Calu3 (cell line): ENCODE measurements at regions of chr14 and their contacts with region 1.

Region 1: DNA sequence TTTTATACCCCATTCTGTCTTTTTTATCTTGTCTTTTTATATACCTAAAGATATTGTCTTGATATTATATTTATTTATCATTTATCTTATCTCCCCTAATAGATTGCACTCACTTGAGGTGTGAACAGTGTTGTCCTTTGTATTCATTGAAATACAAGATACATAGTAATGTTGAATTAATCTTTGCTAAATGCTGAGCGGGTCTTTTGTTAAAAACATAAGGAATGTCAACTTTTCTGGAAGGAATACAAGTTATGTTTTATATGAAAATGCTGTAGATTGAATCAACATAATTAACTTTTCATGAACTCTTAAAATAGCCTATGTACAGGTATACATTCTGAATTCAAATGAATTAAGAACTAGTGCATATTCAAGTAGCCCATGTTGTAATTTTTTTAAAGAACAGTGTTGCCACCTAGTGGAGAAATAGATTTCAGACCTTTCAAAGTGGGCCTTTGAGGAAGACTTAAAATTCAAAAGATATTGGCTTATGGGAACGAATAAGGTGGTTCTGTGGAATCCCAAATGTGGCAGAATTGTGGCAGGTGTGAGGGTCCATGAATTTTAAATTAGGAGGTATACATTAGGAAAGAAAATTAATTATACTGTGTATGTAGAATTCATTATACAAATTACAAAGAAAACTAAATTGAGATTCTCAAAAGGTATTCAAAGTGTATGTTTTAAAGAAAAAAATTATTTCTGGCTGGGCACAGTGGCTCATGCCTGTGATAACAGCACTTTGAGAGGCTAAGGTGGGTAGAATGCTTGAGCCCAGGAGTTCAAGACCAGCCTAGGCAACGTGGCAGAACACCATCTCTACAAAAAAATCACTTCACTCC is 19.1 kb downstream of the BBOF1 start:
- DNase-seq: peak; percentile 21
- H3K4me3 Mint-ChIP-seq: no peak overlapping the region
- H3K27ac Mint-ChIP-seq: no peak overlapping the region
- H3K4me1 Mint-ChIP-seq: no peaks in the 10 kb centered on the region
- H3K27me3 Mint-ChIP-seq: no peaks in the 10 kb centered on the region
- CTCF ChIP-seq: peak; percentile 40

Region 2: DNA sequence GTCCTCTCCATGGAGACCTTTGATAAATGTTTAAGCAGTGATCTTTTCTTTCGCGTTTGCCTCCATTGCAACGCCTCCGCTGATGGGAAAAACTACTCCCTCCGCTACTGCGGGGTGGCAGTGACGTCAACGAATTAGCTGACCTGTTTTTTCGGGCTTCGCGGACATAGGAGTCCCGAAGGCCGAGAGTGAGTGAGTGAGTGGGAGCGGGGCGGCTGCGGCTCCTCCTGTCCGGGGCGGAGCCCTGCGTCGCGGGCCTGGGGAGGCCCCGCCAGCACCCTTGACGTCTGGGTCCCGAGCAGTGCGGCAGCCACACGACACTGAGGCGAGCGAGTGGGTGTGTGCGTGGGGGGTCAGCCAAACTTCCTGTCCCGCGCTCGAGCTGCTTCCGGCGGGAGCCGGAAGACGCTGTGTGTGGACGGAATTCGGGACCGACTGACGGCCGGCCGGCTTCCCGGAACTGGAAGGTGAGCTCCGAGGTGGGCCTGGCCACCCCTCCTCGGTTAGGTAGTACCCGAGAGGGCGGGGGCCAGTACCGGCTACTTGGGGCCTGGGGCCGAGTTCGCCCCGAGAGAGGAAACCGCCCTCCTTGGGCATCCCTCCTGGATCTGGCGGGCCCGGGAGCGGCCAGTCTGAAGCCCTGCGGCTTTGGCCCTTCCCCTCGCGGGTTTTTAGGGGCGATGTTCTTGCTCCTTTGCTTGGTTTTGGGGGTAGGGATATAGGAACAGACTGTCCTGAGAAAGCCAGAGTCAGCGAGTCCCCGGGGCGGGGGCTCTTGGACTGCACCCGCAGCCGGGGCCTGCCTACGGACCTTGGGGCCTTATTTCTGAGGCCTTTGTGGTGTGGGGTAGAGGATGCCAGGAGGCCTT is 151.6 kb before region 1 on chr14 and contains the start of gene ZNF410:
- CTCF ChIA-PET with region 1: no interaction called
- intact Hi-C with region 1: loop called (anchors 10 kb)
- DNase-seq: peak; percentile 90
- H3K4me3 Mint-ChIP-seq: peak within 1 kb of the TSS; percentile 67
- H3K27ac Mint-ChIP-seq: peak within 1 kb of the TSS; percentile 51
- H3K4me1 Mint-ChIP-seq: peaks cover 25% of the 10 kb centered on the region
- H3K27me3 Mint-ChIP-seq: no peaks in the 10 kb centered on the region
- CTCF ChIP-seq: no peak
- total RNA-seq, gene ZNF410: 37.6 and 39.7 TPM in 2 replicates